ENCODE measurements at regions of chr3 and their contacts with region 1.

Region 1: DNA sequence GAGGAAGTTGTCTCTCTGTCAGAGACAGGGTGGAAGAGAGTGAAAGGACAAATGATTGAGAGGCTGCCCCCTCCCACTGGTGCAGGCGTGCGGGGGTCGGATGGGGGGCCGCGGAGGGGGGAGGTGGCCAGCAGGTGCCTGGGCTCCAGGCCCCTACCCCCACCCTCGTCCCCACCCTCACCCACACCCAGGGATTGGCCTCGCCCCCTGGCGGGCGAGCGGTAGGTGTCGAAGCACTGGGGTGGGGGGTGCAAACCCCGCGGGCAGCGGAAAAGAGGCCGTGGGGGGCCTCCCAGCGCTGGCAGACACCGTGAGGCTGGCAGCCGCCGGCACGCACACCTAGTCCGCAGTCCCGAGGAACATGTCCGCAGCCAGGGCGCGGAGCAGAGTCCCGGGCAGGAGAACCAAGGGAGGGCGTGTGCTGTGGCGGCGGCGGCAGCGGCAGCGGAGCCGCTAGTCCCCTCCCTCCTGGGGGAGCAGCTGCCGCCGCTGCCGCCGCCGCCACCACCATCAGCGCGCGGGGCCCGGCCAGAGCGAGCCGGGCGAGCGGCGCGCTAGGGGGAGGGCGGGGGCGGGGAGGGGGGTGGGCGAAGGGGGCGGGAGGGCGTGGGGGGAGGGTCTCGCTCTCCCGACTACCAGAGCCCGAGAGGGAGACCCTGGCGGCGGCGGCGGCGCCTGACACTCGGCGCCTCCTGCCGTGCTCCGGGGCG is at the start of gene KAT2B:
- DNase-seq: peak; percentile 79
- H3K4me3 ChIP-seq: peak within 1 kb of the TSS; percentile 62 to 74
- H3K27ac ChIP-seq: peak within 1 kb of the TSS; percentile 97
- H3K4me1 ChIP-seq: no peaks in the 10 kb centered on the region
- H3K27me3 ChIP-seq: no peaks in the 10 kb centered on the region
- CTCF ChIP-seq: peak; percentile 64 to 84 (median 78)
- POLR2A ChIP-seq: peak; percentile 54
- total RNA-seq, gene KAT2B: 16.4 to 31.7 TPM

Region 2: DNA sequence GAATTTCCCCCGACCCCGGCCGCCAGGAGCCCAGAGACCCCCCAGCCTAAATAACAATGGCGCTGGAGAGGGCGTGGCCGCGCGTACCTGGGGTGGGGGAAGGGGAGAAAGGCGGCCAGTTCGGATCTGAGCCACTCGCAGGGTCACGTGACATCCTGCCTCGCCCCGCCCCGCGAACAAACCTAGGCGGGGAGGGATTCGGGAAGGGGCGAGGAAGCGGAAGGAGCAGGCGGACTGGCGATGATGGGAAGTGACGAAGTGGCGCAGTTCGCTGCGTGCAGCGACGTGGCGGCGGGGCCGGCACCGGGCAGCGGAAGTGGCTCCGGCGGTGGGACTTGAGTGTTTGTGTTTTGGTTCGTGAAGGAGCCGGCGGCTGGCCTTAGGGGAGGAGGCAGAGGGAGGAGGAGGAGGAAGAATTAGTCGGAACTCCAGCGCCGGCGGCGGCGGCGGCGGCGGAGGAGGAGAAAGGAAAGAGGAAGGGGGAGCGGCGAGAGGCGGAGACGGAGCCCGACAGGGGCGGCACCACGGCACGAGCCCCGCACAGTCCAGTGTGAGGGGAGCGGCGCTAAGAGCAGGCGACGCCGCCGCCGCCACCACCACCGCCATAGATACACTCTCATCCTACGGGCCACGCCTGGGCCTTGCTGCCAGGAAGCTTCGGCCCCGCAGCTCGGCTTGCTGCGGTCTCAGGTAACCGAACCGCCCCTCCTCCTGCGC is 92.9 kb before region 1 on chr3 and contains the start of gene RAB5A:
- intact Hi-C with region 1: loop called (anchors 5 kb)
- DNase-seq: peak; percentile 98
- H3K4me3 ChIP-seq: peak within 1 kb of the TSS; percentile 82 to 93
- H3K27ac ChIP-seq: peak within 1 kb of the TSS; percentile 95 to 99
- H3K4me1 ChIP-seq: no peaks in the 10 kb centered on the region
- H3K27me3 ChIP-seq: no peaks in the 10 kb centered on the region
- CTCF ChIP-seq: peak in 2 of 4 experiments; percentile 12 to 29
- POLR2A ChIP-seq: peak; percentile 82
- total RNA-seq, gene RAB5A: 55.4 to 61.5 TPM

Region 3: GRCh38 chr3:20141851-20142250 is 101.9 kb after region 1 on chr3:
- intact Hi-C with region 1: loop called (anchors 5 kb)
- DNase-seq: peak; percentile 34
- H3K4me3 ChIP-seq: no peak overlapping the region
- H3K27ac ChIP-seq: peak overlapping the region in 1 of 2 donors; percentile 36
- H3K4me1 ChIP-seq: no peaks in the 10 kb centered on the region
- H3K27me3 ChIP-seq: no peaks in the 10 kb centered on the region
- CTCF ChIP-seq: no peak
- POLR2A ChIP-seq: no peak

Region 4: GRCh38 chr3:20185701-20186598 is 146.0 kb after region 1 on chr3 and contains the start of gene SGO1:
- intact Hi-C with region 1: loop called (anchors 2 kb)
- DNase-seq: peak; percentile 99
- H3K4me3 ChIP-seq: peak within 1 kb of the TSS; percentile 57 to 58
- H3K27ac ChIP-seq: peak within 1 kb of the TSS; percentile 88 to 95
- H3K4me1 ChIP-seq: no peaks in the 10 kb centered on the region
- H3K27me3 ChIP-seq: no peaks in the 10 kb centered on the region
- CTCF ChIP-seq: peak in 2 of 4 experiments; percentile 29 to 34
- POLR2A ChIP-seq: peak; percentile 84
- total RNA-seq, gene SGO1: 0.41 to 7.3 TPM